Activated CD4-positive, alpha-beta memory T cell treated with anti-CD3 and anti-CD28 coated beads for 36 hours (primary cell): ENCODE measurements at regions of chr20 and their contacts with region 1.

Region 1: DNA sequence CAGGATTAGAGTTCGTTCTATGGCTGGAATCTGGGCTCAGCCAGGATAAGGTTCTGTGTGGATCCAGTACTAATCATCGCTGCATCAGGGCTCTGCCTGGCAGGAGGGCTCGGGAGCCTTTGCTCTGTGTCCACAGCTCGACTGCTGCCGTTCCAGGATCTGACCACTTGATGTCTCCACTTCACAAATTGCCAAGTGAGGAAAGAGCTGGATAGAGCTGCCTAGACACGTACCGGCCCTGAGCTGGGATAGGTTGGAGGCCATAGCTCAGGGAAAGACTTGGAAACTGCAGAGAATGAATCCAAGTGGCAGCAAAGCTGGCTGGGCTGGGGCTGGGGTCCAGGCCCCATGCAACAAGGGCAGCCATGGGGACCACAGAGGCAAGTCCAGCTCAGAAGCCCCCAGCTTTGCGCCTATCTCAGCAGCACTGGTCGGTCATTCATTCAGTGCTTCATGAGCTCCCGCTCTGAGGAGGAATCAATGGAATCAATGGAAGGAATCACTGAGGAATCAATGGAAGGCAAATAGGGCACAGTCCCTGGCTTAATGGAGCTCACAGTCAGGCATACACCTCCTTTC is 38.0 kb upstream of the TOP1 start:
- DNase-seq: peak; percentile 86
- H3K4me3 Mint-ChIP-seq: no peak overlapping the region
- H3K27ac Mint-ChIP-seq: peak overlapping the region; percentile 24
- H3K4me1 Mint-ChIP-seq: peaks cover 26% of the 10 kb centered on the region
- H3K27me3 Mint-ChIP-seq: no peaks in the 10 kb centered on the region

Region 2: DNA sequence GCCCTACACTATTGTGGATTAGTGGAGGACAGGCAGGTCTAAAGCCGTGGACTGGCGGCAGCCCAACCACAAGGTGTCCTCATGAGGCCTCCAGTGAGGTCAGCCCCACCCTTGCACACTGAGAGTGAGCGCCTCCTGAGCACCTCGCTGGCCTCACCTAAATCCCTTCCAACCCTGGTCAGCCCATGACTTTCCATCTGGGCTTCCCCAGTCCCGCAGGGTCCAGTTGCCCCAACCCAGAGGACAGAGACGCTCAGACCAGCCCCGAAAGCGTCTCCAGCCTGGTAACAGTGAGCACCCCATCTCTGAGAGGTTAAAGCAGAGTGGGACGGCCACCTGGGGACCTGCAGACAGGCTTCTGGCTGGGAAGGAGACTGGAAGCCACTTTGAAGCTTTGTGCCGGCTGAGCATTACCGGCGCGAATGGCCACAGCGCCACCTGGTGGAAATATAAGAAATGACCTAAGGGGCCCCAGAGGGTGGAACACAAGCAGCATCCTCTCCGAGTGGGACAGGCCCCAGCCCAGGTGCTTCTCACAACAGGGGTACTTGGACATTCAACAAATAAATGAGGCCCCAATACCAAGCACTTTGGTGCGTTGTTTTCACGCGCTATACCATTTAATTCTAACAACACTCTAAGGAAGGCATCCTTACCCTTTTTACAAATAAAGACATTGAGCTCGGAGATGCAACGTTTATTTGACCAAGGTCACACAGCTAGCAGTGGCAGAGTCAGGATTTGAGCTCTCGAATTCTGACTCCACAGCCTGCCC is 27.7 kb before region 1 on chr20:
- CTCF ChIA-PET with region 1: interaction called, 15 read pairs
- POLR2A ChIA-PET with region 1: no interaction called
- intact Hi-C with region 1: no loop called
- DNase-seq: peak; percentile 82
- H3K4me3 Mint-ChIP-seq: no peak overlapping the region
- H3K27ac Mint-ChIP-seq: no peak overlapping the region
- H3K4me1 Mint-ChIP-seq: peaks cover 9% of the 10 kb centered on the region
- H3K27me3 Mint-ChIP-seq: no peaks in the 10 kb centered on the region

Region 3: DNA sequence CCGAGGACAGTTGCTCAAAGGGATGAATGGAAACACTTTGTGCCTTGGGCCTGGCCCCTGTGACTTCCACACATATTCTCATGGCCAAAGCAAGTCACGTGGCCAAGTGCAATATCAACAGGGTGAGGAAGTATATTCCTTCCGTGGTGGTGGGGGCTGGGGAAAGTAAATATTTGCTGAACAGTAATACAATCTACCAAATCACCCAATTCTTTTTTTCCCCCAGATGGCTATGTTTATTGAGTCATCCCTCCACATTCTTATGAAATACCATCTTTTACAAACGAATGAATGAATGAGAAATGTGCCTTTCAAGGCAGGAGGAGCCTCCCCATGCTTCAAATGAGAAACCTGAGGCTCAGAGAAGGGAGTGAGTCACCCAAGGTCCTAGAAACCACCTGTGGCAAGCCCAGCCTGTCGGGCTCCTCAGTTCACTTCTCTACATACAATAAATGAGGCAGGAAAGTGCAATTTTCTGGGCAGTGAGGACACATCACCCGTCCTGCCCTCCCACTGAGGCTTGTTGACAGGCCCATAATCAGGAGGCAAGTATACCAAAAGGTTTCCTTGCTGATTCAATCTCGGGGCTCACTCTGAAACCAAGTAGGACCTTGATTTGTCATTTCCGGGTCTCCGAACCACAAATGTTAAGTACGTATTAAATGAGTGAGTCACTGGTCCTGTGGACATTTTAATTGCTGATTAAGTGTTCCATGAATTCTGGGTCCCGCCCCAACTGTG is 12.7 kb after region 1 on chr20:
- CTCF ChIA-PET with region 1: interaction called, 36 read pairs
- POLR2A ChIA-PET with region 1: no interaction called
- intact Hi-C with region 1: loop called (anchors 1 kb)
- DNase-seq: peak; percentile 89
- H3K4me3 Mint-ChIP-seq: peak overlapping the region; percentile 67
- H3K27ac Mint-ChIP-seq: peak overlapping the region; percentile 99
- H3K4me1 Mint-ChIP-seq: peaks cover 46% of the 10 kb centered on the region
- H3K27me3 Mint-ChIP-seq: no peaks in the 10 kb centered on the region

Region 4: DNA sequence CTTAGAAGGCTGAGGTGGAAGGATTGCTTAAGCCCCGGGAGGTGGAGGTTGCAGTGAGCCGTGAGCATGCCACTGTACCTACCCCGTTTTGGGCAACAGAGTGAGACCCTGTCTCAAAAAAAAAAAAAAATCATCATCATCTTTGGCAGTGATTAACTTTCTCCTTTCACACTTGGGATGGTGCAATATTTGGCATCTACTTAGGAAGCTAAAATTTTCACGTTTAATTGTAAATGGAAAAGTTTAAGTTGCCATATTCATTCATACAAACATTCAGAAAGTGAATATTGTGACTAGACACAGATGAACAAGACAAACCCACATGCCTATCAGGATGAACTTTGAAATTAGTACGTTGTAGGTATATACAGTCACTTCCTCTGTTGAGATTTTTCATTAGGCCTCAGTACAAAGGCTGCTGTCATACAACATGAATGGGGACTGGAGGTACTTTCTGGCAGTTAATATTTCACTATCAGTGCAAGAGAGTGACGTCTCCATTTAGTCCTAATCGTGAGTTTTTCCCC is 48.3 kb after region 1 on chr20:
- CTCF ChIA-PET with region 1: interaction called, 32 read pairs
- POLR2A ChIA-PET with region 1: no interaction called
- intact Hi-C with region 1: no loop called
- DNase-seq: no peak
- H3K4me3 Mint-ChIP-seq: no peak overlapping the region
- H3K27ac Mint-ChIP-seq: peak overlapping the region; percentile 72
- H3K4me1 Mint-ChIP-seq: peaks cover 85% of the 10 kb centered on the region
- H3K27me3 Mint-ChIP-seq: no peaks in the 10 kb centered on the region

Region 5: GRCh38 chr20:41057999-41058896 is 67.6 kb after region 1 on chr20:
- CTCF ChIA-PET with region 1: interaction called, 19 read pairs
- POLR2A ChIA-PET with region 1: interaction called, 3 read pairs
- intact Hi-C with region 1: no loop called
- DNase-seq: peak; percentile 52
- H3K4me3 Mint-ChIP-seq: no peak overlapping the region
- H3K27ac Mint-ChIP-seq: peak overlapping the region; percentile 26
- H3K4me1 Mint-ChIP-seq: peaks cover 64% of the 10 kb centered on the region
- H3K27me3 Mint-ChIP-seq: no peaks in the 10 kb centered on the region

Region 6: GRCh38 chr20:41072190-41072863 is 81.7 kb after region 1 on chr20:
- CTCF ChIA-PET with region 1: interaction called, 16 read pairs
- POLR2A ChIA-PET with region 1: no interaction called
- intact Hi-C with region 1: loop called (anchors 5 kb)
- DNase-seq: no peak
- H3K4me3 Mint-ChIP-seq: no peak overlapping the region
- H3K27ac Mint-ChIP-seq: peak overlapping the region; percentile 66
- H3K4me1 Mint-ChIP-seq: peaks cover 79% of the 10 kb centered on the region
- H3K27me3 Mint-ChIP-seq: no peaks in the 10 kb centered on the region

Region 7: GRCh38 chr20:41095110-41095969 is 104.7 kb after region 1 on chr20:
- CTCF ChIA-PET with region 1: interaction called, 373 read pairs
- POLR2A ChIA-PET with region 1: interaction called, 6 read pairs
- intact Hi-C with region 1: loop called (anchors 1 kb)
- DNase-seq: peak; percentile 71
- H3K4me3 Mint-ChIP-seq: no peak overlapping the region
- H3K27ac Mint-ChIP-seq: peak overlapping the region; percentile 90
- H3K4me1 Mint-ChIP-seq: peaks cover 22% of the 10 kb centered on the region
- H3K27me3 Mint-ChIP-seq: no peaks in the 10 kb centered on the region

Region 8: GRCh38 chr20:41526327-41526726 is 535.7 kb after region 1 on chr20:
- CTCF ChIA-PET with region 1: no interaction called
- POLR2A ChIA-PET with region 1: no interaction called
- intact Hi-C with region 1: no loop called
- DNase-seq: no peak
- H3K4me3 Mint-ChIP-seq: no peak overlapping the region
- H3K27ac Mint-ChIP-seq: no peak overlapping the region
- H3K4me1 Mint-ChIP-seq: peaks cover 25% of the 10 kb centered on the region
- H3K27me3 Mint-ChIP-seq: no peaks in the 10 kb centered on the region